GM12878 (cell line): ENCODE measurements at regions of chr17 and their contacts with region 1.

Region 1: DNA sequence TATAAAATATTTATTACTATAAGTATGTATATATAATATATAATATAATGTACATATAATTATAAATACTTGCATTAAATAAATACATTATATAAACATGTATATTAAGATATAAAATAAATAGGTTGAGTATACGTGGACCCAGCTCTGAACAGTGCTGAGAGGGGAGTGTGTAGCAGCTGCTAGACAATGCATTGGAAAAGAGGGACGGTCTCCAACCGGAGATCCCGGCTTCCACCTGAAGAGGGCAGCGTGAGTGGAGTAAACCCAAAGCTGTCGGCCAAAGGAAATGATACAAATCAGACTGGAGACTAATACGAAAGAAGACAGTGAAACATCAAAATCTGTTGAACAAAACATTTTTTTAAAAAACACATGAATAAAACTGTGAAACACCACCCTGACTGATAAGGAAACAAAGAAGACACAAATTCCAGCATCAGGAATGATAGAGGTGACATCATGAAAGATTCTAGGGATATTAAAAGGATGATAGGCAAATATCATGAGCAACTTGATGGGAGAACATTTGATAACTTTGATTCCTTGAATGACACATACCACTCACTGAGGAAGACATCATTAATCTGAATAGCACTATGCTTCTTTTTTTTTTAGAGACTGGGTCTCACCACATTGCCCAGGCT is 125.4 kb upstream of the CHMP6 start:
- DNase-seq: peak; percentile 31
- ATAC-seq: peak; percentile 96
- H3K4me3 ChIP-seq: no peak overlapping the region
- H3K27ac ChIP-seq: no peak overlapping the region
- H3K4me1 ChIP-seq: no peaks in the 10 kb centered on the region
- H3K27me3 ChIP-seq: no peaks in the 10 kb centered on the region
- CTCF ChIP-seq: peak; percentile 68 to 77 (median 75)
- EP300 ChIP-seq: no peak
- POLR2A ChIP-seq: no peak
- RAD21 ChIP-seq: peak; percentile 82

Region 2: GRCh38 chr17:80694992-80695912 is 171.0 kb before region 1 on chr17:
- CTCF ChIA-PET with region 1: no interaction called
- POLR2A ChIA-PET with region 1: no interaction called
- RAD21 ChIA-PET with region 1: no interaction called
- SMC1A ChIA-PET with region 1: no interaction called
- in situ Hi-C with region 1: no loop called
- intact Hi-C with region 1: no loop called
- DNase-seq: no peak
- ATAC-seq: no peak
- H3K4me3 ChIP-seq: no peak overlapping the region
- H3K27ac ChIP-seq: no peak overlapping the region
- H3K4me1 ChIP-seq: no peaks in the 10 kb centered on the region
- H3K27me3 ChIP-seq: no peaks in the 10 kb centered on the region
- CTCF ChIP-seq: no peak
- EP300 ChIP-seq: no peak
- POLR2A ChIP-seq: no peak
- RAD21 ChIP-seq: no peak

Region 3: DNA sequence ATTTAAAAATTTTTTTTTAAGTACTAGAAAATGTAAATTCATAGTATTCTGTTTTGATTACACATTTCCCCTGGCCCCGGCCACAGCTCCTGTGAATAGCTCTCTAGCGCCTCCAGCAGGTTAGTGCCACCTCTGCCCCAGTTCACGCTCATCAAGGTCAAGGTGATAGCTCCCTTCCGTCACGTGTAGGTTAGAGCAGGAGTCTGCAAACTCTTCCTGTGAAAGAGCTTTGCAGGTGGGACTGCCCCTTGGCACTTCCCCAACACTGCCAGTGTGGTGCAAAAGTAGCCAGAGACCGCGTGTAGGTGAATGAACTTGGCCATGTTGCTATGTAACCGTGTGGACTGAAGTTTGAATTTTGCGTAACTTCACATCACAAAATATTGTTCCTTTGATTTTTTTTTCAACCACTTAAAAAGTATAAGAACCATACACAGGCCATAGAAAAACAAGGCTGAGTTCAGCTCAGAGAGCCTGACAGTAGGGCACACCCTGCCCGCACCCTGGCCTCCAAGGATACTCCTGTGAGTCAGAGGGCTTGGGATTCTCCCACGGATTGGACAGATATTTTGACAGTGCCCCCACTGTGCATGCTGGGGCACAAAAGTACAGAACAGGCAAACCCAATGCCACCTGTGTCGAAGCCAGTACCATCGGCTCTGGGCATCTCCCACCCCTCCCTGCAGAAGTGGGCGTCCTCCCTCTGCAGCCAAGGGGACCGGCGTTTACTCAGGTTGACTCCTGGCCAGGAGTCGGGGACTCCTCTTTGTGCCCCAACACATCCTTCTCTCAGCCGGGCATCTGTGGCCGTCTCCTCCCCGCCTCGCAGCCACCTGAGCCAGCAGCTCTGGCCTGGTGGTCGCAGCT is 33.4 kb after region 1 on chr17:
- CTCF ChIA-PET with region 1: interaction called, 12 read pairs
- POLR2A ChIA-PET with region 1: no interaction called
- RAD21 ChIA-PET with region 1: interaction called, 5 read pairs
- SMC1A ChIA-PET with region 1: interaction called, 3 read pairs
- in situ Hi-C with region 1: no loop called
- intact Hi-C with region 1: no loop called
- DNase-seq: no peak
- ATAC-seq: peak; percentile 45
- H3K4me3 ChIP-seq: no peak overlapping the region
- H3K27ac ChIP-seq: no peak overlapping the region
- H3K4me1 ChIP-seq: peaks cover 25% of the 10 kb centered on the region
- H3K27me3 ChIP-seq: no peaks in the 10 kb centered on the region
- CTCF ChIP-seq: peak; percentile 40 to 68 (median 48)
- EP300 ChIP-seq: no peak
- POLR2A ChIP-seq: no peak
- RAD21 ChIP-seq: peak; percentile 68

Region 4: GRCh38 chr17:80970044-80970761 is 103.9 kb after region 1 on chr17:
- CTCF ChIA-PET with region 1: interaction called, 19 read pairs
- POLR2A ChIA-PET with region 1: no interaction called
- RAD21 ChIA-PET with region 1: interaction called, 15 read pairs
- SMC1A ChIA-PET with region 1: interaction called, 7 read pairs
- in situ Hi-C with region 1: loop called (anchors 5 kb)
- intact Hi-C with region 1: loop called (anchors 2 kb)
- DNase-seq: no peak
- ATAC-seq: peak; percentile 95
- H3K4me3 ChIP-seq: no peak overlapping the region
- H3K27ac ChIP-seq: no peak overlapping the region
- H3K4me1 ChIP-seq: no peaks in the 10 kb centered on the region
- H3K27me3 ChIP-seq: no peaks in the 10 kb centered on the region
- CTCF ChIP-seq: peak; percentile 55 to 78 (median 73)
- EP300 ChIP-seq: no peak
- POLR2A ChIP-seq: no peak; the same call in 1 of the 2 replicates
- RAD21 ChIP-seq: peak; percentile 72